Activated CD4-positive, alpha-beta T cell treated with anti-CD3 and anti-CD28 coated beads for 36 hours (primary cell): ENCODE measurements at regions of chr10 and their contacts with region 1.

Region 1: GRCh38 chr10:85995791-85996190 is 370.8 kb downstream of the GRID1 start:
- DNase-seq: peak; percentile 50
- ATAC-seq: no peak
- H3K4me3 Mint-ChIP-seq: no peak overlapping the region
- H3K27ac Mint-ChIP-seq: no peak overlapping the region
- H3K4me1 Mint-ChIP-seq: no peaks in the 10 kb centered on the region
- H3K27me3 Mint-ChIP-seq: peaks cover 14% of the 10 kb centered on the region

Region 2: DNA sequence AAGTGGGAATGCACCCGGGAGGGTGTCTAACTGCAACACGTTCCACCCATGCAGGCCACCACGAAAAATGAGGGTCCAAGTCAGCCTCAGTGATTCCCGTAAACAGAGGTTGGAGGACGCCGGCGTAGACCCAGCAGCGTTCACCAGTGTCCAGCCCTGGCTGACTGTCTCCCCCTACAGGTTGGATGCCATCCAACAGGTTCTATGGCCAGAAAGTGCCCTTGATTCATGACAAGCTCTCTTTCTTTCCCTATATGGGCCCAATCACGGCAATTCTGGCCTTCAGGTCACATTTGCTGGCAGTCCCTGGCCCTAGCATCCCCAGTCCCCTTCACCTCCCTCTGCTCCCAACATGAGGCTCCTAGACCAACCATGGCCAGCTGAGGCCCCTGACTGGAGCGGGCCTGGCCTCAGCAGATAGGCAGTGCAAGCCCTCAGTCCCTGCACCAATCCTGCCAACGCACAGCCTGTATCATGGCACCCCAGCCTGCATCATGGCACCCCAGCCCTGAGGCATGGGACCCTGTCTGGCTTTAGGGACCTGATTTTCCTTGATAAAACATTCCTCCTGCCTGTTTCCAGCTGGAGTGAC is 143.4 kb after region 1 on chr10:
- CTCF ChIA-PET with region 1: no interaction called
- POLR2A ChIA-PET with region 1: no interaction called
- intact Hi-C with region 1: loop called in 1 of 2 experiments (anchors 5 kb)
- DNase-seq: peak; percentile 44
- ATAC-seq: no peak
- H3K4me3 Mint-ChIP-seq: no peak overlapping the region
- H3K27ac Mint-ChIP-seq: no peak overlapping the region
- H3K4me1 Mint-ChIP-seq: no peaks in the 10 kb centered on the region
- H3K27me3 Mint-ChIP-seq: no peaks in the 10 kb centered on the region